Dorsolateral prefrontal cortex (tissue), 120 donors: ENCODE measurements at regions of chr18 and their contacts with region 1.

Region 1: DNA sequence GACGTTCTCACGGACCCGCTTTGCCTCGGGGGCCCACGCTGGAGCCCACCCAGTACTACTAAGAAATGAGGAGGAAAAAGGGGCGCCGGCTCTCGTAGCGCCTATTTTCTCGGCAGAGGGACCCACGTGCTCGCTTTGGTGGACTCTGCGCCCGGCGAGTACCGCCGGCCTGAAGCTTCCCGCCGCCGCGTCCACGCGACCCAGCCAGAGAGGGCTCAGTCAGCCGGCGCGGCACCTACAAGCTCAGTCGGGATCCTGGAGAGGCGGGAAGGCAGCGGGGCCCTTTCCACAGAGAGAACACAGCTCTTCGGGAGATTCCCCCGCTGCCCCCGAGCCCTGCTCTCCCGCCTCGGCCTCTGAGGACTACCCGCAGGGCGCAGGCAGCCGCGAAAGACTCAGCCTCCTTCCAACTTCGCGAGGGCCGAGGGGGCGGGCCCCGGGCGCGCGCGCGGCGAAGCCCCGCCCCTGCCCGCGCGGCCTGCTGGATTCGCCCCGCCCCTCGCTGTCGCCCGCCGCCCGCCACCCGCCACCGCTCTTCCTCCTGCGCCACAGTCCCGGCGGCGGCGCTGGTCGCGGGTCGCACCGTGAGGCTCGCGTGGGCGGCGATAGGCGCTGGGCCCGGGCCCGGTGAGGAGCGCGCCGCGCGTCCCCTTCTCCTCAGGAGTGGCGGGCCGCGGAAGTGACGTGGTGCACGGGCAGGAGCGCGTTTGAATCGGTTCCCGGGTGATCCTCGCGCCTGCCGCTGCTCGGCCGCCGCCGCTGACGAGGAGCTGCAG is at the start of gene SMCHD1:
- DNase-seq: peak; percentile 79 to 93 (median 88)
- H3K4me3 ChIP-seq: peak within 1 kb of the TSS; percentile 60 to 100 (median 94)
- H3K27ac ChIP-seq: peak within 1 kb of the TSS; percentile 61 to 97 (median 92)
- H3K27me3 ChIP-seq: no peaks in the 10 kb centered on the region
- CTCF ChIP-seq: peak in 13 of 56 donors; percentile 8 to 51 (median 18)
- total RNA-seq, gene SMCHD1: 43.9 to 86.1 (median 62.2) TPM

Region 2: DNA sequence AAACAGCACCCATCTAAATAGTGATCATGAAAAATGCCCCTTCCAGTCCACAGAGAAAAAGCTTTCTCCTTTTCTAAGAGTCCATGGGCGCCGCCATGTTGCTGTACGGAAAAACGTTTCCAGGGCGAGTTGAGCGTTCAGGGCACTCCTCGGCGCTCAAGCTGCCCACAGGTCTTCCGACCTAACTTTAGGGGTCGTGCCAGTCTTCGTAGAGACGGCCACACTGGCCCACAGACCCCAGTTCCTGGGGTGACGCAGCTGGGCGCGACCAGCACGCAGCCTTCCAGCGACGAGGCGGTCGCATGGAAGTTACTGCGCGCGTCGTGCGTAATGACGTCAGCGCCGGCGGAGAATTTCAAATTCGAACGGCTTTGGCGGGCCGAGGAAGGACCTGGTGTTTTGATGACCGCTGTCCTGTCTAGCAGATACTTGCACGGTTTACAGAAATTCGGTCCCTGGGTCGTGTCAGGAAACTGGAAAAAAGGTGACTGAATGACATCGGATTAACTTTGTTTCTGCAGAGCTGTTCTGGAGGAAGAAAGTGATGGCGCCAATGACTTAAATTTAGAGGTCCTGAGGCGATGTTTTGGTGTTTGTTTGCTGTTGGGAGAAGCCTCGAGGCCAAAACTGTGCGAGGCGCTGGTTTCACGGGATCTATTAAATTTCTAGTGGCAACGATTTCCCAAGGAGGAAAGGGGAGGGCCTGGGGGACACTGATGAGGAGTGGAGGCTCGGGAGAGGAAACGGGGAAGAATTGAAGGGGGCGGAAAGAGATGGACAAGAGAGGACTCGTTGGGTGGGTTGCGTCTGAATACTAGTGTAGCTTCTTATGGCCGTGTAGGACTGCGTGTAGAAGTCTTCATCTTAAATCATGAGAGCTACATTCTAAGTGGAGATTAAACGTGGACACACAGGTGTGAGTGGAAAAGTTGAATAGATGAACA is 83.9 kb before region 1 on chr18 and contains the starts of genes METTL4 and NDC80:
- intact Hi-C with region 1: loop called (anchors 1 to 2 kb)
- DNase-seq: peak; percentile 74 to 90 (median 78)
- H3K4me3 ChIP-seq: peak within 1 kb of the TSS; percentile 55 to 97 (median 81)
- H3K27ac ChIP-seq: peak within 1 kb of the TSS; percentile 84 to 100 (median 98)
- H3K27me3 ChIP-seq: peaks cover 0 to 9% (median 0%) of the 10 kb centered on the region in 45 donors
- CTCF ChIP-seq: peak in 19 of 56 donors; percentile 5 to 53 (median 25)
- total RNA-seq, gene METTL4: 6.5 to 24.8 (median 13.3) TPM
- total RNA-seq, gene NDC80: 0.20 to 1.1 (median 0.42) TPM in 12 of 120 experiments, not detected in the others

Region 3: DNA sequence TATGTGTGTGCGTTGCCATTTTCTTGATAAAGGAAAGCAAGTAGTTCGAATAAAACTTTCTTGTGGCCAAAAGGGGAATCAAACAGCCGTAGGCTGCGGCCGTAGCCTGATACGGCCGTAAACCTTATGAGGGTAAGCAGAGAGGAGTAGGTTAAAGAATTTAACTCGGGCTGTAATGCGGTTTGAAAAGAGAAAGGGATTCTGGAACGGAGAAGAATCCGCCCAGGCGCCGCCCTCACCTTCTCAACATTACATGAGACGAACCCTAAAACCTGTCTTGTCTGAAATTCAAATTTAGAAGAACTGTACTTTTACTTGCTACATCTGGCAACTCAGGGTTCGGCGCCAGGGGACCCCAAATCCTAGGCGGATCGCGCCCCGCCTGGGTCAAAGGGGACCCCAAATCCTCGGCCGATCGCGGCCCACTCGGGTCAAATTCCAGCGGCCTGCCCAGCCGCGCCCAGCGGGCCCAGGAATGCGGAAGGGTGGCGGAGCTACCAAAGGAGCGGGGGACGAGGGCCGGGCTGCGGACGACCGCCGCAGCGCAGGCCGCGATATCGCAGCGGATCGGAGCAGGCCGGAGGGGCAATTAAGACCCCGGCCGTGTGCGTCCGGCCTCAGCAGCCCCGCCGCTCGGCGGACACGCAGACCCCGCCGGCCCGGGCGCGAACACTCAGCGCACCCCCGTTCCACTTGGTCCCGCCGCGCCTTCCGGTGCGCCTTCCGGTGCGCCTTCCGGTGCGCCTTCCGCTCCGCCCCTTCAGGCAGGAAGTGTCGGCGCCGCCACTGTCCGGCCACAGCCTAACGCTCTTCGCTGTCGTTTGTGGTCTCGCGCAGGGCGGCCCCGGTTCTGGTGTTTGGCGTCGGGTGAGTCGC is 606.2 kb after region 1 on chr18 and contains the start of gene MYL12B:
- intact Hi-C with region 1: loop called (anchors 5 to 10 kb)
- DNase-seq: peak; percentile 58 to 87 (median 74)
- H3K4me3 ChIP-seq: peak within 1 kb of the TSS; percentile 59 to 99 (median 88)
- H3K27ac ChIP-seq: peak within 1 kb of the TSS; percentile 80 to 100 (median 97)
- H3K27me3 ChIP-seq: no peaks in the 10 kb centered on the region
- CTCF ChIP-seq: peak in 37 of 56 donors; percentile 3 to 55 (median 28)
- total RNA-seq, gene MYL12B: 72.6 to 168 (median 118) TPM